ENCODE measurements at regions of chr6 and their contacts with region 1.

Region 1: GRCh38 chr6:70686548-70687133 is 19.0 kb downstream of the SMAP1 start:
- DNase-seq: no peak
- H3K4me3 ChIP-seq: no peak overlapping the region
- H3K27ac ChIP-seq: no peak overlapping the region
- H3K4me1 ChIP-seq: peaks cover 6 to 31% (median 23%) of the 10 kb centered on the region in 4 donors
- H3K27me3 ChIP-seq: no peaks in the 10 kb centered on the region
- CTCF ChIP-seq: peak; percentile 66 to 86 (median 78)
- EP300 ChIP-seq: no peak
- POLR2A ChIP-seq: no peak

Region 2: GRCh38 chr6:70547313-70547712 is 139.3 kb before region 1 on chr6:
- in situ Hi-C with region 1: loop called in 2 of 4 experiments (anchors 10 to 25 kb)
- intact Hi-C with region 1: no loop called
- DNase-seq: no peak
- H3K4me3 ChIP-seq: no peak overlapping the region
- H3K27ac ChIP-seq: no peak overlapping the region
- H3K4me1 ChIP-seq: no peaks in the 10 kb centered on the region
- H3K27me3 ChIP-seq: no peaks in the 10 kb centered on the region
- CTCF ChIP-seq: peak in 1 of 5 experiments; percentile 13
- EP300 ChIP-seq: no peak
- POLR2A ChIP-seq: no peak

Region 3: GRCh38 chr6:70566751-70567382 is 119.8 kb before region 1 on chr6 and contains the start of gene SDHAF4:
- in situ Hi-C with region 1: loop called in 1 of 4 experiments (anchors 25 kb)
- intact Hi-C with region 1: loop called (anchors 10 kb)
- DNase-seq: peak; percentile 94
- H3K4me3 ChIP-seq: peak within 1 kb of the TSS; percentile 63 to 95 (median 81)
- H3K27ac ChIP-seq: peak within 1 kb of the TSS; percentile 86 to 91 (median 90)
- H3K4me1 ChIP-seq: peaks cover 4 to 18% (median 6%) of the 10 kb centered on the region in 4 donors
- H3K27me3 ChIP-seq: no peaks in the 10 kb centered on the region
- CTCF ChIP-seq: no peak
- EP300 ChIP-seq: no peak
- POLR2A ChIP-seq: peak; percentile 64
- total RNA-seq, gene SDHAF4: 1.9 to 8.3 (median 5.3) TPM

Region 4: GRCh38 chr6:70575891-70576495 is 110.6 kb before region 1 on chr6:
- in situ Hi-C with region 1: loop called in 1 of 4 experiments (anchors 25 kb)
- intact Hi-C with region 1: loop called (anchors 10 kb)
- DNase-seq: peak; percentile 12
- H3K4me3 ChIP-seq: no peak overlapping the region
- H3K27ac ChIP-seq: no peak overlapping the region
- H3K4me1 ChIP-seq: no peaks in the 10 kb centered on the region
- H3K27me3 ChIP-seq: no peaks in the 10 kb centered on the region
- CTCF ChIP-seq: no peak
- EP300 ChIP-seq: no peak
- POLR2A ChIP-seq: no peak

Region 5: DNA sequence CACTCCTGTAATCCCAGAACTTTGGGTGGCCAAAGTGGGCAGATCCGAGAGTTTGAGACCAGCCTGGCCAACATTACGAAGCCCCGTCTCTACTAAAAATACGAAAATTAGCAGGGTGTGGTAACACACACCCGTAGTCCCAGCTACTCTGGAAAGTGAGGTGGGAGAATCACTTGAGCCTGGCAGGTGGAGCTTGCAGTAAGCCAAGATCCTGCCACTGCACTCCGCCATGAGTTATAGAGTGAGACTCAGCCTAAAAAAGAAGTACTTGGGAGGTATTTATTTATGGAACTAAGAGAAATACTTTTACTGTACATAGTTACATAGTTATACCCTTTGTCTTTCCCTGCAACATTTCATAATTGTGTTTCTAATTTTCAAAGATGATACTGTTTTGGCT is 48.9 kb after region 1 on chr6:
- in situ Hi-C with region 1: no loop called
- intact Hi-C with region 1: no loop called
- DNase-seq: no peak
- H3K4me3 ChIP-seq: no peak overlapping the region
- H3K27ac ChIP-seq: no peak overlapping the region
- H3K4me1 ChIP-seq: peaks cover 0 to 4% (median 2%) of the 10 kb centered on the region in 4 donors
- H3K27me3 ChIP-seq: no peaks in the 10 kb centered on the region
- CTCF ChIP-seq: no peak
- EP300 ChIP-seq: no peak
- POLR2A ChIP-seq: no peak

Measured in transverse colon (tissue), 4 donors.